Stomach (tissue), 19 donors: ENCODE measurements at regions of chr5 and their contacts with region 1.

Region 1: DNA sequence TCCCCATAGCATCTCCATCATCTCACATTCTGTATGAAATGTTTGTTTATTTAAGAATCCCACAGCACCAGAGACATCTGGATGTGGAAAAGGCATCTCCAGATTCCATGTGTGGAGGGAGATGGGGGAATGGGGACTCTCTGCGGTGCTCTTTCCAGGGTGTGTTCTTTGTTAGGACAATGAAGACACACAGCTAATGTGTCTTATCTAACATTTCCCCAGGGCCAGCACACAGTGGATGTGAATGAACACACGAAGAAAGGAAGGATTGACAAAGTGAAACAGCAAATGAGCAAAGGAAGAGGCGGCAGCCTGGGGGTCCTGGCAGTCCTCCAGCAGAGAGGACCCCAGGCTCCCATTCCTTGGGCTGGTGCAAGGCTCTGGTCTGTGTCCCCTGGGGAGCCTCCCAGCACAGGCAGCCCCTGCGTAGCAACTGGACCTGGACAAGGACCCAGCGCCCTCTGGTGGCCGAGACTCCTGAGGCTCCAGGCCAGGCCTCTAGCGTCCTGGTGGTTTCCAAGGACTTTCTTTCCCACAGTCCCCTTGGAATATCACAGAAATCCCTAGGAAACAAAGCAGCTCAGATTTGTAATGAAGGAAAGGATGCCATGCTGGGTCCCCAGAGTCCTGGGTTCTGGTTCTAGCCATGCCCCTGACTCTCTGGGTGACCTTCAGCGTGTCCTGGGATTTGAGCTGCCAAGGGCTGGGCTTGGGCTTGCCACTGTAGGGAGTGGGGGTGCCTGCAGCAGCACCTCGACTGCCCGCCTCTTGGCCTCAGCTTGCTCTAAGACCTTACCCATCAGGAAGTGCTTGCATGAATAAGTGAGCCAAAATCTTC is 3.5 kb upstream of the PDLIM7 start:
- DNase-seq: peak; percentile 93 to 95
- H3K4me3 ChIP-seq: no peak overlapping the region
- H3K27ac ChIP-seq: peak overlapping the region in 1 of 5 donors; percentile 37
- H3K4me1 ChIP-seq: peaks cover 18 to 40% (median 32%) of the 10 kb centered on the region in 4 donors
- H3K27me3 ChIP-seq: no peaks in the 10 kb centered on the region
- CTCF ChIP-seq: peak in 5 of 7 experiments; percentile 59 to 94 (median 90)
- EP300 ChIP-seq: no peak
- POLR2A ChIP-seq: no peak

Region 2: DNA sequence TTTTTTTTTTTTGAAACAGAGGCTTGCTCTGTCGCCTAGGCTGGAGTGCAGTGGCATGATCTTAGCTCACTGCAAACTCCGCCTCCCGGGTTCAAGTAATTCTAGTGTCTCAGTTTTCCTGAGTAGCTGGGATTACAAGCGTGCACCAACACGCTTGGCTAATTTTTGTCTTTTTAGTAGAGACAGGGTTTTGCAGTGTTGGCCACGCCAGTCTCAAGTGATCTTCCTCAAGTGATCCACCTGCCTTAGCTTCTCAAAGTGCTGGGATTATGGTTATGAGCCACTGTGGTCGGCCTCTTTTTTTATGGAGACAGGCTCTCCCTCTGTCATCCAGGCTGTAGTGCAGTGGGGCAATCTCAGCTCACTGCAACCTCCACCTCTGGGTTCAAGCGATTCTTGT is 280.3 kb before region 1 on chr5:
- intact Hi-C with region 1: no loop called
- DNase-seq: no peak
- H3K4me3 ChIP-seq: no peak overlapping the region
- H3K27ac ChIP-seq: no peak overlapping the region
- H3K4me1 ChIP-seq: peaks cover 0 to 9% (median 0%) of the 10 kb centered on the region in 4 donors
- H3K27me3 ChIP-seq: no peaks in the 10 kb centered on the region
- CTCF ChIP-seq: no peak
- EP300 ChIP-seq: no peak
- POLR2A ChIP-seq: no peak

Region 3: DNA sequence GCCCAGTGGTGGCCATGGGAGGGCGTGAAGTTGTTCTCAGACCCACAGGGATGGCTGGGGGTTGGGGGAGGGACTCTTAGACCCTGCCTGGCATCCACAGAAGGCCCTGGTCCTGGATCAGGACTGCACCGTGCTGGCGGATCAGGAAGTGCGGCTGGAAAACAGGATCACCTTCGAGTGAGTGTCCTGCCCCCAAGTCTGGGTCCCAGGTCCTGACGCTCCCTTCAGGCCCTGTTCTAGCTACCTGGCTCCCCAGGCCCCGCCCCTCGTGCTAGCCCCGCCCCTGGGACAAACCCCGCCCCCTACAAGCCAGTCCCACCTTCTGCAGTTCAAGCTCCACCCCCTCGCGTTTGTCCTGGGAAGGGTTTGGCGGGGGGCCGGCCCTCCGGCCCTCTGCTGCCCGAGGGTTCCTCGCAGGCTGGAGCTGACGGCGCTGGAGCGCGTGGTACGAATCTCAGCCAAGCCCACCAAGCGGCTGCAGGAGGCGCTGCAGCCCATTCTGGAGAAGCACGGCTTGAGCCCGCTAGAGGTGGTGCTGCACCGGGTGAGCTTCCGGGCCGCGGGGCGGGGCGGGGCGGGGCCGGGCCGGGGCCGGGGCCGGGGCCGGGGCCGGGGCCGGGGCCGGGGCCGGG is 130.3 kb before region 1 on chr5:
- intact Hi-C with region 1: no loop called
- DNase-seq: peak; percentile 89 to 92
- H3K4me3 ChIP-seq: peak overlapping the region; percentile 32 to 55 (median 44)
- H3K27ac ChIP-seq: peak overlapping the region; percentile 50 to 74 (median 68)
- H3K4me1 ChIP-seq: peaks cover 45 to 71% (median 60%) of the 10 kb centered on the region in 4 donors
- H3K27me3 ChIP-seq: no peaks in the 10 kb centered on the region
- CTCF ChIP-seq: peak in 4 of 7 experiments; percentile 35 to 58 (median 44)
- EP300 ChIP-seq: no peak
- POLR2A ChIP-seq: no peak

Region 4: DNA sequence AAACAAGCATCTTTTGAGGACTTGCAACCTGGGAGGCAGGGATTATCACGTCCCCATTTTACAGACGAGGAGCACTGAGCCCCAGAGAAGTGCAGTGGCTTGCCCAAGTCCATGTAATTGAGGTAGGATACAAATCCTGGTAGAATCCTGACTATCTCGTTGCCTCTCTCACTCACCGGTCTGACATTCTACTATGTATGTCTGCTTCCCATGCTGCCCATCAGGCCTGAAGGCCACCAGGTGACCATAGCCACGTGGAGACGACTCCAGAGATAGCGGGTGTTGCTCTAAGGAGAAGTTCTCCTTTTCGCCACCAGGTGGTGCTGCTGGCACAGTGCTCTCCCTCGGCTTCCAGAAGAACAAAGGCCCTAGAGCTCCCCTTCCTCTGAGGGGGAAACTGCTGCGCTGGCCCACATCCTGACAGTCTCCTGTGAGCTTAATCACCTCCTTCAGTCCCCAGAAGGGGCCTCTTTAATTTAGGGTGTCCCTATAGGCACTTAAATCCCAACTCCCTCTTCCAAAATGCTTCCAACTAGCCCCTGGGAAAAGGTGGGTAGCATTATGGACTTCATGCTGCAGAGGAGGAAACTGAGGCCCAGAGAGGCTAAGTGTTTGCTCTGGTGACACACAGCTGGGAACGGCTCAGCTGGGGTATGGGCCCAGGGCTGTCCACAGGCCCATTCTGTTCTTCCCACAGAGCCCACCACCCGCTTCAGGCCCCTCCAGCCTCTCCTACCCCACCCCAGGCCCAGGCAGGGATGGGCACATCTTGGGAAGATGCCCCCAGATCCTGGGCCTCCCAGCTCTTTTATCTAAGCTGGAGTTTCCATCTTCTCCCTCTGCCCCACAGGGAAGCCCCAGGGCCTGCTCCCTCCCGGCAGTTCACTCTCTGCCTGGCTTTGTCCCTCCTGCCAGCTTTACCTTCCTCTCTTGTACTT is 110.3 kb before region 1 on chr5:
- intact Hi-C with region 1: loop called (anchors 5 kb)
- DNase-seq: peak; percentile 89 to 96
- H3K4me3 ChIP-seq: no peak overlapping the region
- H3K27ac ChIP-seq: peak overlapping the region in 4 of 5 donors; percentile 24 to 33 (median 26)
- H3K4me1 ChIP-seq: peaks cover 0 to 20% (median 15%) of the 10 kb centered on the region in 4 donors
- H3K27me3 ChIP-seq: peaks cover 0 to 32% (median 3%) of the 10 kb centered on the region in 3 donors
- CTCF ChIP-seq: peak in 6 of 7 experiments; percentile 68 to 99 (median 98)
- EP300 ChIP-seq: no peak
- POLR2A ChIP-seq: no peak

Region 5: GRCh38 chr5:179033004-179033580 is 1532.2 kb after region 1 on chr5:
- intact Hi-C with region 1: no loop called
- DNase-seq: no peak
- H3K4me3 ChIP-seq: no peak overlapping the region
- H3K27ac ChIP-seq: no peak overlapping the region
- H3K4me1 ChIP-seq: no peaks in the 10 kb centered on the region
- H3K27me3 ChIP-seq: no peaks in the 10 kb centered on the region
- CTCF ChIP-seq: no peak
- EP300 ChIP-seq: no peak
- POLR2A ChIP-seq: no peak